Aorta (tissue), 5 donors: ENCODE measurements at regions of chr1 and their contacts with region 1.

Region 1: GRCh38 chr1:35451125-35451528 is 106.1 kb downstream of the KIAA0319L start:
- DNase-seq: peak; percentile 85 to 93
- ATAC-seq: peak; percentile 88
- H3K4me3 ChIP-seq: no peak overlapping the region
- H3K27ac ChIP-seq: no peak overlapping the region
- H3K4me1 ChIP-seq: no peaks in the 10 kb centered on the region
- H3K27me3 ChIP-seq: no peaks in the 10 kb centered on the region

Region 2: GRCh38 chr1:35557292-35558063 is 106.4 kb after region 1 on chr1 and contains the starts of genes KIAA0319L and NCDN:
- intact Hi-C with region 1: loop called in 1 of 2 experiments (anchors 2 kb)
- DNase-seq: peak; percentile 98
- ATAC-seq: peak; percentile 98
- H3K4me3 ChIP-seq: peak within 1 kb of the TSS; percentile 75 to 85
- H3K27ac ChIP-seq: peak within 1 kb of the TSS; percentile 32 to 72
- H3K4me1 ChIP-seq: no peaks in the 10 kb centered on the region
- H3K27me3 ChIP-seq: no peaks in the 10 kb centered on the region
- total RNA-seq, gene KIAA0319L: 46.0 to 58.6 TPM
- total RNA-seq, gene NCDN: 20.4 to 21.7 TPM

Region 3: DNA sequence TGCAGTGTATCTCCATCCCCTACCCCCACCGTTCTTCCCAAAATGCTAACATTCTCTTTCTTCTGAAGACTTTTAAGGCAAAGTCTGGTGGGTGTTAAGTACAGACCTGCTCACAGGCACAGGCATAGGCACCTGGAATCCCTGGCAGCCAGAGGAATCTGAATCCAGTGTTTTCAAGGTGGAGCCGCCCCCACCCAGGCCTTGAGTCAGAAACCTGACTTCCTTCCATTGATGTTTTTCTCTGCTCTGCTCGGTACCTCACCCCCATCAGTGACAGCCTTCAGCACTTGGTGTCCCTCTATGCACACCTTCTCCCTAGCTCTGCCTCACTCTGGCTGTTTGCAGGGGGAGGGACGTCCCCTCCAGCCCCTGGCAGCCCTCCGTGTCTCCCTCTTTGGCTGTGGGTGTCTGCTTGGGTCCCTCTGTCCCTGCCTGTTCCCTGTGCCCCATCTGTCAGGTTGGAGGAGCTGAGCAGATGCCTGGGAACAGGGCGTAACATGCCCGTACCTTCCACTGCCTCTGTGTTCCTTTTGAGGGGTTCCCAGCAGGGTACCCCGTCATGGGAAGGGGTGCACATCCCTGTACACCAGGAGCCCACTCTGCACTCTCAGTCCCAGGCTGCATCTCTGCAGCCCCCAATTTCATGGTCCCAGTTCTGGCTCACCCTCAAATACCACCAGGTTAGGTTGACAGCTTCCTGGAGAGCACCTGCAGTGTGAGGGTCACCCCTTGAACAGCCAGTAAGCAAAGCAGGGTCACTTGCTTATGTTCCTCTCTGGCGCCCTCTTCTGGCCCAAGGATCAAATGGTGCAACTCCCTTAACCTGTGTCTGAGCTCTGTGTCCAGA is 113.1 kb after region 1 on chr1:
- intact Hi-C with region 1: loop called (anchors 2 kb)
- DNase-seq: peak; percentile 85 to 90
- ATAC-seq: peak; percentile 59
- H3K4me3 ChIP-seq: no peak overlapping the region
- H3K27ac ChIP-seq: no peak overlapping the region
- H3K4me1 ChIP-seq: no peaks in the 10 kb centered on the region
- H3K27me3 ChIP-seq: no peaks in the 10 kb centered on the region

Region 4: DNA sequence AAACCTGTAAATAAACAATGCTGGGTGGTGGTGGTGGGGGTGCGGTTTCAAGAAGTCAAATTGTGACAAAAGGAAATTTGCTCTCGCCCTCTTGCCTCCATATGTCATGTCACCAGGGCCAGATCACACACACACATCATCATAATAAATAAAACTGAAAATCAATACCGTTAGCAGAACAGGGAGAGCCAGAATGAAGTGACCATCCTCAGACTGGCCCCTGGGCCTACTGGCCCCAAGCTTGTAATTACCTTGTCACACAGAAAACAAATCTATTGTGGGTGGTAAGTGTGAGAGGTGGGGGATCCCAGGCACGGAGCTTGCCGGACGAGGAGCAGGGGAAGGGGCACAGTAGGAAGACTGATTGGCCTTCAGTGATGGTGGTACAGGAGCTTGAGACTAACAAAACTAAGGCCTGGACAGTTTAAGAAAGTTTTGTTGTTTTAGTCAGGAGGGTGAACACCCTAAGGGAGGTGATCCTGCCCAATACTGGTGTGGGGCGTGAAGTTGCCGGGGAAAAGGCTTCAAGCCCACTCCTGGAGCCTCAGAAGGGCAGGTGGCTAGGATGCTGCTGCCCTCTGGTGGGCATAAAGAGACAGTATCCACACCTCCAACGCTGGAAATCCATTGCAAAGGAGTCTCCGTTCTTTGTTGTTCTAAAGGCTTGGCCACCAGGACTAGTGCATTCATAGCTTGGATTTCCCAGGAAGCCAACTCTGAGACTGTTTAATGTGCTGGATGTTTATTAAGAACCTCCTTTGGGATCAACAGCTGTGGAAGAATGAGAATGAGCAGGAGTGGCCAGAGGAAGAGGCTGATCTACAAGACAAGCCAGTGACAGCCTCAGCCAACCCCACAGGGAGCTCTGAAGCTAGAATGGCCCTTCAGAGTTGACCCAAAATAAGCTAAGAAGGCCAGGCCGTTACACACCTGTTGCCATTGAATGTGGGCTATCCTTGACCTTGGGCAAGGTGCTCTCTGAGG is 275.6 kb after region 1 on chr1:
- intact Hi-C with region 1: loop called in 1 of 2 experiments (anchors 5 kb)
- DNase-seq: peak in 1 of 2 donors; percentile 49
- ATAC-seq: peak; percentile 74
- H3K4me3 ChIP-seq: no peak overlapping the region
- H3K27ac ChIP-seq: no peak overlapping the region
- H3K4me1 ChIP-seq: no peaks in the 10 kb centered on the region
- H3K27me3 ChIP-seq: no peaks in the 10 kb centered on the region

Region 5: GRCh38 chr1:35769759-35770446 is 318.8 kb after region 1 on chr1 and contains the start of gene CLSPN:
- intact Hi-C with region 1: loop called (anchors 5 kb)
- DNase-seq: peak; percentile 97
- ATAC-seq: peak; percentile 98
- H3K4me3 ChIP-seq: peak within 1 kb of the TSS; percentile 54 to 69
- H3K27ac ChIP-seq: peak within 1 kb of the TSS in 1 of 2 donors; percentile 71
- H3K4me1 ChIP-seq: no peaks in the 10 kb centered on the region
- H3K27me3 ChIP-seq: no peaks in the 10 kb centered on the region
- total RNA-seq, gene CLSPN: 0.96 to 1.1 TPM